HCT116 (cell line): ENCODE measurements at regions of chr6 and their contacts with region 1.

Region 1: DNA sequence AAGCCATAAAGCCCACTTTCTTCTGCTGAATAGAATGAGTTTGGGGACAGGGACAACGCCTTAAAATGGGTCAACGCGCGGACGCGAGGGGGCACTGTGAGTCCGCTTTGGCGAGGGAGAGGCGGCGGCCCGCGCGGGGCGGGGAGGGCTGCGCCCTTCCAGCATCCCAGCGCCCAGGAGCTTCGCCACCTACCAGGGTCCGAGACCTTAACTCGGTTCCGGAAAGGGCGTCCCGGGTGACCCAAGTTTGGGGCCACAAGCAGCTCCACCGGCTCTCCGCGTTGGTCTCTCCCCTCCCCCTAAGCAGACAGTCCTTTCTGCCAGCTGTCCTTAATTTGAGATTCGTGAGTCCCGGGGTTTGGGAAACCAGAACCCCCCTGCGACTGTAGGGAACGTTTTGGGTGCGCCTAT is 1.8 kb upstream of the SAMD5 start:
- DNase-seq: no peak
- ATAC-seq: peak; percentile 56
- H3K4me3 ChIP-seq: peak overlapping the region; percentile 72 to 90
- H3K27ac ChIP-seq: no peak overlapping the region
- H3K4me1 ChIP-seq: peaks cover 5 to 29% of the 10 kb centered on the region in 2 experiments
- H3K27me3 ChIP-seq: no peaks in the 10 kb centered on the region
- CTCF ChIP-seq: peak; percentile 72 to 86 (median 82)
- POLR2A ChIP-seq: no peak
- RAD21 ChIP-seq: peak; percentile 97

Region 2: DNA sequence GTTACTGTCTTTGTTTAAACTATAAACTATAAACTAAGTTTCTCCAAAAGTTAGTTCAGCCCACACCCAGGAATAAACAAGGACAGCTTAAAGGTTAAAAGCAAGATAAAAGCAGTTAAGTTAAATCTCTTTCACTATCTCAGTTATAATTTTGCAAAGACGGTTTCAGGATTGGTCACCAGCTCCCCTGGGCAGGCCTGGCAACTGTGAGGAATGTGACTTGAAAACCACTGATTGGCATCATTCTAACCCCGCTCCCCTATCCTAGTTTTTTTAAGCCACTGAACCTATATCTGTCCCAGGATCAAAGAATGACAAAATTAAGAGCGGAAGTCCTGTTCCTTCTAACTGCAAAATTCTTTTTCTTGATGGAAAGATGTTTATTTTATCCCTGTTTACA is 36.1 kb after region 1 on chr6:
- CTCF ChIA-PET with region 1: no interaction called
- POLR2A ChIA-PET with region 1: no interaction called
- RAD21 ChIA-PET with region 1: no interaction called
- intact Hi-C with region 1: loop called (anchors 1 kb)
- DNase-seq: no peak
- ATAC-seq: no peak
- H3K4me3 ChIP-seq: no peak overlapping the region
- H3K27ac ChIP-seq: no peak overlapping the region
- H3K4me1 ChIP-seq: no peaks in the 10 kb centered on the region
- H3K27me3 ChIP-seq: no peaks in the 10 kb centered on the region
- CTCF ChIP-seq: no peak
- POLR2A ChIP-seq: no peak
- RAD21 ChIP-seq: no peak

Region 3: DNA sequence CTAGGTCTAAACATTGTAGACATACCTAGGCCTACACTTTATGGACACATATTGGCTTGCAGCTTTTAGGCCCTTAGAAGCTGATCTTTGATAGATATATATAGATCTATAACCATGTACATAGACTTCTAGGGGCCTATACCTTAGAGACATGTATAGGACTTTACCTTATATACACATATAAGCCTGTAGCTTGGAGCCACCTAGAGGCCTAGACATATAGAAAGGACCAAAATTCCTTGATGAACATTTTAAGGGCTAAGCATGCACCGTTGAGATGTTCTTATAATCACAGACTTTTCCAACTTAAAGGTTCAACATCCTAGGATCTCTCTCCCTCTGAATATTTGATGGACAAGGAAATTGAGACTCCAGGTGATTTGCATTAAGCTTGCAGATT is 464.3 kb after region 1 on chr6:
- CTCF ChIA-PET with region 1: no interaction called
- POLR2A ChIA-PET with region 1: no interaction called
- RAD21 ChIA-PET with region 1: no interaction called
- intact Hi-C with region 1: loop called (anchors 1 kb)
- DNase-seq: no peak
- ATAC-seq: peak; percentile 74
- H3K4me3 ChIP-seq: no peak overlapping the region
- H3K27ac ChIP-seq: no peak overlapping the region
- H3K4me1 ChIP-seq: no peaks in the 10 kb centered on the region
- H3K27me3 ChIP-seq: no peaks in the 10 kb centered on the region
- CTCF ChIP-seq: peak; percentile 17 to 32 (median 26); a peak in 4 of 6 replicates
- POLR2A ChIP-seq: no peak
- RAD21 ChIP-seq: peak; percentile 49

Region 4: DNA sequence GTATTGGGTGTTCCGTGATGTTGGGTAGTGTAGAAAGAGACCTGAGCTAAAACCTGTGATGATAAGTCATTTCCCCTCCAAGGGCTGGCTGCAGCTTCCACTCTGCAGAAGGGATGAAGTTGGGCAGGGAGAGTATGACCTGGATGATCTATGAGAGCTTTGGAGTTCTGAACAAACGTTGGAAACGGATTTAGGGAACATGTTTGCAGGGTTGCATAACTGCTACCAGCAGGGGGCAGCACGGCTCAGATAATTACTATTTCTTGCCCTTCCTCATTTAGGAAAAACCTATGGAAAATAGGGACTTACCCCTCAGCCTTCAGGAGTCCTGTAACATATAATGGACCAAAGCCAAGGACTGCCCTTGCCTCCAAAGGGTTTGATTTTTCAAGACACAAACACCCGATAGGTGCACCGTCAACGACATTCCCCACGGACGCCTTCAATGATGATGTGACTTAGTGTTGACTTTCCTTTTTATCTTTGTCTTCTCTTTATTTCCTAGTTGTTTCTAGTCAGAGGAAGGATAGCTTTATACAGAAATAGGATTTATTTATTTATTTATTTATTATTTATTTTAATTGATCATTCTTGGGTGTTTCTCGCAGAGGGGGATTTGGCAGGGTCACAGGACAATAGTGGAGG is 671.0 kb after region 1 on chr6:
- CTCF ChIA-PET with region 1: interaction called, 13 read pairs
- POLR2A ChIA-PET with region 1: no interaction called
- RAD21 ChIA-PET with region 1: interaction called in 1 of 2 experiments, 3 read pairs
- intact Hi-C with region 1: no loop called
- DNase-seq: peak; percentile 31
- ATAC-seq: peak; percentile 80
- H3K4me3 ChIP-seq: no peak overlapping the region
- H3K27ac ChIP-seq: no peak overlapping the region
- H3K4me1 ChIP-seq: no peaks in the 10 kb centered on the region
- H3K27me3 ChIP-seq: no peaks in the 10 kb centered on the region
- CTCF ChIP-seq: peak; percentile 76 to 90 (median 83)
- POLR2A ChIP-seq: no peak
- RAD21 ChIP-seq: peak; percentile 83

Region 5: DNA sequence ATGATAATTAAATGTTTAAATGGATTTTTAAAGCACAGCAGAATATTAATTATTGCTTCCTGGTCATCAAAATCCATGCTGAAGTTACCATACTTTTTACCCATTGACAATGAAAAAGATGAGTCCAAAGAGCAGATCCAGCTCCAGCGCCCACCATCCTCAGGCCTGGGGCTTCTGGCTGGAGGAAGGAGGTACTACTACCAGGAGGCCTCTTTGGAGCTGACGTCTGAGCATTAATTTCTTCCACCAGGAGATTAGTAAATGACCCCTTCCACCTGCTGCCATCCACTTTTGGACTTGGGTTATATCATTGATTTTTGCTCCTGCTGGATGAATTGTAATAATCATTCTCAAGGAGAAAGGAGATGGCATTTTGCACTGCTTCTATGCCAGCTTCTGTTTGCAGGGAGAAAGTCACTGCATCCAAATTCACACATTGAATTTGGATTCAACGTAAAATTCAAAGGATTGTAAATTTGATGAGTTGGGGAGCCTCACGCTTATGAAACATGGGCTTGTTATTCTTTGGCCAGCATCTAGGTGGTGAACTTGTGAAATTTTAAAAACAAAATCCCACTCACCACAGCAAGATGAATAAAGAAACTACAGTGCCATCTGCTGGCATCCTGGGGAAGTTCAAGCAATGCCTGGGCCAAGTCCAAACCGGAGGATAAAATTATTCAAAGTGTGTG is 957.8 kb after region 1 on chr6:
- CTCF ChIA-PET with region 1: interaction called, 8 read pairs
- POLR2A ChIA-PET with region 1: no interaction called
- RAD21 ChIA-PET with region 1: no interaction called
- intact Hi-C with region 1: loop called (anchors 5 kb)
- DNase-seq: peak; percentile 48
- ATAC-seq: peak; percentile 88
- H3K4me3 ChIP-seq: no peak overlapping the region
- H3K27ac ChIP-seq: no peak overlapping the region
- H3K4me1 ChIP-seq: no peaks in the 10 kb centered on the region
- H3K27me3 ChIP-seq: no peaks in the 10 kb centered on the region
- CTCF ChIP-seq: peak; percentile 85 to 97 (median 96)
- POLR2A ChIP-seq: no peak
- RAD21 ChIP-seq: peak; percentile 93